Heart right ventricle (tissue), 16 donors: ENCODE measurements at regions of chr4 and their contacts with region 1.

Region 1: GRCh38 chr4:15805583-15806517 is 27.7 kb downstream of the CD38 start:
- DNase-seq: peak in 1 of 2 donors; percentile 30
- ATAC-seq: peak in 7 of 8 donors; percentile 15 to 78 (median 67)
- H3K4me3 ChIP-seq: no peak overlapping the region
- H3K27ac ChIP-seq: no peak overlapping the region
- H3K4me1 ChIP-seq: peaks cover 0 to 29% (median 3%) of the 10 kb centered on the region in 9 donors
- H3K27me3 ChIP-seq: no peaks in the 10 kb centered on the region
- CTCF ChIP-seq: peak; percentile 47 to 78 (median 72)

Region 2: DNA sequence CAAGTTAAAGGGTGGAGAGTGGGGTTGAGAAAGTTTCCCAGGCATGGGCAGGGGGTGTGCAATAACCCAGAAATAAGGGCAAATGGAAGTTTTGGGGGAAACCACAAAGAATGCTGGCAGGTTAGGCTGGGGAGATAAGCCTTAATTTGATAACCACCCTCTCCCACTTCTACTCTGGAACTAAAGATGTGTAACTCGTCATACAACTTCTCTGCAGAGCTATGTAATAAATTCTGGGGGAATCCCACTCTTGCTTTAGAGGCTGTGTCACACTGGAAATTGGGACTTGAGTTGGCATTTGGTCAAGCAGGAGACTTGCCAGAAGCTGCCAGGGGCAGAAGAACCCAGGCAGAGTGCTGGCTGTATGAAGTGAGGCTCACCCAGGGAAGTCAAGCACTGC is 974.4 kb before region 1 on chr4:
- intact Hi-C with region 1: no loop called
- DNase-seq: no peak
- ATAC-seq: no peak
- H3K4me3 ChIP-seq: no peak overlapping the region
- H3K27ac ChIP-seq: no peak overlapping the region
- H3K4me1 ChIP-seq: peaks cover 0 to 3% (median 0%) of the 10 kb centered on the region in 9 donors
- H3K27me3 ChIP-seq: no peaks in the 10 kb centered on the region
- CTCF ChIP-seq: no peak

Region 3: DNA sequence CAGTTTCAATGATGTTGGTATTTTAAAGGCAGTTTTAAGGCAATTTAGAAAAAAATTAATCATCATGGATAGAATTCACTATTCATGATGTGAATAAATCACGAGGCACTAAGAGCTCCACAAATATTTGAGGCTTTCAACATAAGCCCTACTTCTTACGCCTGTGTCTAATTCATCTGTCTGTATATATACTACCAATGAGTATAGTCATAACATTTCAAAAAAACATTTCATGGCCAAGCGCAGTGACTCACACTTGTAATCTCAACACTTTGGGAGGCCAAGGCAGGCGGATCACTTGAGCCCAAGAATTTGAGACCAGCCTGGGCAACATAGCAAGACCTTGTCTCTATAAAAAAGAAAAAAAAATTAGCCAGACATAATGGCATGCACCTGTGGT is 207.2 kb before region 1 on chr4:
- intact Hi-C with region 1: no loop called
- DNase-seq: no peak
- ATAC-seq: no peak
- H3K4me3 ChIP-seq: no peak overlapping the region
- H3K27ac ChIP-seq: no peak overlapping the region
- H3K4me1 ChIP-seq: peaks cover 0 to 10% (median 0%) of the 10 kb centered on the region in 9 donors
- H3K27me3 ChIP-seq: no peaks in the 10 kb centered on the region
- CTCF ChIP-seq: no peak

Region 4: GRCh38 chr4:15956179-15956850 is 150.5 kb after region 1 on chr4:
- intact Hi-C with region 1: loop called in 9 of 10 experiments (anchors 1 to 5 kb)
- DNase-seq: peak; percentile 66 to 78
- ATAC-seq: peak; percentile 63 to 93 (median 78)
- H3K4me3 ChIP-seq: no peak overlapping the region
- H3K27ac ChIP-seq: no peak overlapping the region
- H3K4me1 ChIP-seq: peaks cover 0 to 5% (median 0%) of the 10 kb centered on the region in 9 donors
- H3K27me3 ChIP-seq: no peaks in the 10 kb centered on the region
- CTCF ChIP-seq: peak; percentile 75 to 94 (median 87)